CD8-positive, alpha-beta T cell (primary cell): ENCODE measurements at regions of chr12 and their contacts with region 1.

Region 1: DNA sequence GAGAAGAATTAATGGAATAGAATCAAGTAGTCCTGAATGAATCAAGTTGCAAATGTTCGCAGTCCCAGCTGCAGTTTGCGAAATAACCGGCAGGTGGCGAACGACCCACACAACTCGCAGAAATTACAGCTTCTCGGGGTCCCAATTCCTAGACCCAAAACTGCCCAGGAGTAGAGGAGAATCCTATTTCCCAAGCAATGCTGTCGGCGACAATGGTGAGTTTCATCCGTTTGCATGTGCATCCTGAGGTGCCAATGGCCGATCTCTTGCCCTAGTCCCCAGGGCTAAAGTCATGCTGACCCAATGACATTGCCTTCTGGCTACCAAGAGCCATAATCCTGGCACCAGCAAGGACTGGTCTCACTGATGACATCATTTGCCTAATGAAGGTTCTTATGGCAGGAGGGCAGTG is 8.5 kb upstream of the ASCL1 start:
- DNase-seq: peak in 8 of 9 experiments; percentile 24 to 70 (median 56)
- ATAC-seq: no peak
- H3K4me3 ChIP-seq: no peak overlapping the region
- H3K4me3 Mint-ChIP-seq: no peak overlapping the region
- H3K27ac ChIP-seq: no peak overlapping the region
- H3K27ac Mint-ChIP-seq: no peak overlapping the region
- H3K4me1 ChIP-seq: no peaks in the 10 kb centered on the region
- H3K4me1 Mint-ChIP-seq: peaks cover 4% of the 10 kb centered on the region
- H3K27me3 ChIP-seq: peaks cover 6 to 8% of the 10 kb centered on the region in 2 experiments
- H3K27me3 Mint-ChIP-seq: peaks cover 50% of the 10 kb centered on the region
- CTCF ChIP-seq: peak; percentile 94

Region 2: DNA sequence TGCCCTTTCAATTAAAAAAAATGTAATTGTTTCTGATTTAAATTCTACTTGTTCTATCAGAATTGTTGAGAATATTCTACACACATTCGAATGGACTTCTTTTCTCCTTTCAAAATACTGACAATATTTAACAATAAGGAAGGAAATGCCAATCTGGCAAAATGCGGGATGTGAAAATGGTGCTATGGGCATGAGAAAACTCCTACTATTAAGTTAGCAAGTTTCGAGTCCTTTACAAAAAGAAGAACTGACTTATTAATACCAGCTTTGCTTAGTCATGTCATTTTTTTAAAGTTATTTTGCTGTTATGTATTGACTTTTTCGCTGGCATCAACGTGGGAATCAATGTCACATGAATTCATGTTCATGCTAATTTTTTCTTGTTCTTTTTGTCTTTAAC is 1509.7 kb before region 1 on chr12:
- CTCF ChIA-PET with region 1: no interaction called
- POLR2A ChIA-PET with region 1: no interaction called
- intact Hi-C with region 1: no loop called
- DNase-seq: no peak
- ATAC-seq: no peak
- H3K4me3 ChIP-seq: no peak overlapping the region
- H3K4me3 Mint-ChIP-seq: no peak overlapping the region
- H3K27ac ChIP-seq: no peak overlapping the region
- H3K27ac Mint-ChIP-seq: no peak overlapping the region
- H3K4me1 ChIP-seq: no peaks in the 10 kb centered on the region
- H3K4me1 Mint-ChIP-seq: no peaks in the 10 kb centered on the region
- H3K27me3 ChIP-seq: peaks cover 0 to 2% of the 10 kb centered on the region in 2 experiments
- H3K27me3 Mint-ChIP-seq: peaks cover 6% of the 10 kb centered on the region
- CTCF ChIP-seq: no peak

Region 3: GRCh38 chr12:102976609-102977280 is 27.8 kb after region 1 on chr12:
- CTCF ChIA-PET with region 1: no interaction called
- POLR2A ChIA-PET with region 1: no interaction called
- intact Hi-C with region 1: no loop called
- DNase-seq: no peak
- ATAC-seq: no peak
- H3K4me3 ChIP-seq: no peak overlapping the region
- H3K4me3 Mint-ChIP-seq: no peak overlapping the region
- H3K27ac ChIP-seq: no peak overlapping the region
- H3K27ac Mint-ChIP-seq: no peak overlapping the region
- H3K4me1 ChIP-seq: no peaks in the 10 kb centered on the region
- H3K4me1 Mint-ChIP-seq: no peaks in the 10 kb centered on the region
- H3K27me3 ChIP-seq: no peaks in the 10 kb centered on the region
- H3K27me3 Mint-ChIP-seq: peaks cover 18% of the 10 kb centered on the region
- CTCF ChIP-seq: no peak

Region 4: GRCh38 chr12:103301642-103302591 is 353.0 kb after region 1 on chr12:
- CTCF ChIA-PET with region 1: no interaction called
- POLR2A ChIA-PET with region 1: no interaction called
- intact Hi-C with region 1: no loop called
- DNase-seq: no peak
- ATAC-seq: no peak
- H3K4me3 ChIP-seq: no peak overlapping the region
- H3K4me3 Mint-ChIP-seq: no peak overlapping the region
- H3K27ac ChIP-seq: no peak overlapping the region
- H3K27ac Mint-ChIP-seq: no peak overlapping the region
- H3K4me1 ChIP-seq: no peaks in the 10 kb centered on the region
- H3K4me1 Mint-ChIP-seq: peaks cover 2% of the 10 kb centered on the region
- H3K27me3 ChIP-seq: peaks cover 0 to 3% of the 10 kb centered on the region in 2 experiments
- H3K27me3 Mint-ChIP-seq: no peaks in the 10 kb centered on the region
- CTCF ChIP-seq: no peak

Region 5: DNA sequence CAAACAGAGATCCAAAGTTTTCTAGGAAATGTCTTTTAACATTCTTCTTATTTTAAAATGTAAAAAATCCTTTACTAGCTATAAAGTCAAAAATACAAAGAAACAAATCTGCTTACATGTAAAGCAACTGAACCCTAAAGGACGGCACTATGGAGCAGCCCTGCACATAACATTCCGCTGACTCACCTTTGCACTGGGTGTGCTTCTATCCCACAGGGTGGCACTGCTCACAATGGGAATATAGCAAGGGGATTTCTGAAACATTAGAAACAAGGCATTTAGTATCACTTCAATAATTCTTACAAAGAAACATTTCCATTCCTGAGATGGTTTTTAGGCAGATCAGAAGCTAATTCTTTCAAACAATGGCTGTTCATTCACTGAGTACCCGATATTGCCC is 452.5 kb after region 1 on chr12:
- CTCF ChIA-PET with region 1: no interaction called
- POLR2A ChIA-PET with region 1: no interaction called
- intact Hi-C with region 1: loop called in 1 of 2 experiments (anchors 5 kb)
- DNase-seq: peak in 2 of 9 experiments; percentile 12 to 32
- ATAC-seq: no peak
- H3K4me3 ChIP-seq: no peak overlapping the region
- H3K4me3 Mint-ChIP-seq: no peak overlapping the region
- H3K27ac ChIP-seq: no peak overlapping the region
- H3K27ac Mint-ChIP-seq: no peak overlapping the region
- H3K4me1 ChIP-seq: no peaks in the 10 kb centered on the region
- H3K4me1 Mint-ChIP-seq: peaks cover 2% of the 10 kb centered on the region
- H3K27me3 ChIP-seq: no peaks in the 10 kb centered on the region
- H3K27me3 Mint-ChIP-seq: no peaks in the 10 kb centered on the region
- CTCF ChIP-seq: no peak